Endothelial cell of umbilical vein (primary cell): ENCODE measurements at regions of chr7 and their contacts with region 1.

Region 1: DNA sequence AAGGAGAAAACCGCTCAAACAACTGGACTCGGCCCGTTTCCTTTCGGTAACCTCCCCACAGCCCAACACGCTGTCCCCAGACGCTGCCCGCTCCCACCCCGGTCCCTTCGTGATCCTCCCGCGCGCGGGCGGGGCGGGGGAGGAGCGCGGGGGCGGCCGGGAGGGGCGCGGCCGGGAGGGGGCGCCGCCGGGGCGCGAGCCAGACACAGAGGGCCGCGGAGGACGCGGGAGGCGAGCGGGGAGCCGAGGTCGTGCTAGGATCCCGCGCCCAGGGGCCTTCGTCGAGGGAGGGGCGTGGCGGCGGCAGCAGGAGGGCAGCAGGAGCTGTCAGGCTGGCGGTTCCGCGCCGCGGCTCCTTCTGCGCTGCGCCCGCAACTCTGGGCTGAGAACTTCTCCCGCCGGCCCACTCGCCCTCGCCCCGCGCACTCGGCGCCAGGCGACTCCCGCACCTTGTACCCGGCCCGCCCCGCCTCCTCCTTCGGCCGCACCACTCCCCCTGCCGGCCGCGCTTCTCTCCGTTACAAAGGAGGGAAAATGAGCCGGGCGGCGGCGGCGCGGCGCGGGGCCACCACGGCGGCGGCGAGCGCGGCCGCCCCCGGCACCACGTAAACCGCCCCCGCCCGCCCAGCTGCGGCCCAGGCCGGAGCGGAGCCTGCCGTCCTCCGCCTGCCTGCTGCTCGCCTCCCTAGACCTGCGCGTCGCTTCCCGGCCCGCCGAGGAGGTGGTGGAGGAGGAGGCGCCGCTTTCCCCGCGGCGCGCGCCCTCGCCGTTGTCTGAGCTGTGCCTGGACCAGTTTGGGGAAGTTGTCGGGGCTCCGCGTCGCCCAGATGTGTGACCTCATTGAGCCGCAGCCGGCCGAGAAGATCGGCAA is at the start of gene CDK14:
- DNase-seq: peak; percentile 68
- H3K4me3 ChIP-seq: peak within 1 kb of the TSS; percentile 81 to 95 (median 94)
- H3K27ac ChIP-seq: peak within 1 kb of the TSS; percentile 80
- H3K4me1 ChIP-seq: peaks cover 46% of the 10 kb centered on the region
- H3K27me3 ChIP-seq: no peaks in the 10 kb centered on the region
- CTCF ChIP-seq: peak; percentile 25 to 54
- POLR2A ChIP-seq: no peak
- total RNA-seq, gene CDK14: 34.2 and 41.5 TPM in 2 replicates

Region 2: DNA sequence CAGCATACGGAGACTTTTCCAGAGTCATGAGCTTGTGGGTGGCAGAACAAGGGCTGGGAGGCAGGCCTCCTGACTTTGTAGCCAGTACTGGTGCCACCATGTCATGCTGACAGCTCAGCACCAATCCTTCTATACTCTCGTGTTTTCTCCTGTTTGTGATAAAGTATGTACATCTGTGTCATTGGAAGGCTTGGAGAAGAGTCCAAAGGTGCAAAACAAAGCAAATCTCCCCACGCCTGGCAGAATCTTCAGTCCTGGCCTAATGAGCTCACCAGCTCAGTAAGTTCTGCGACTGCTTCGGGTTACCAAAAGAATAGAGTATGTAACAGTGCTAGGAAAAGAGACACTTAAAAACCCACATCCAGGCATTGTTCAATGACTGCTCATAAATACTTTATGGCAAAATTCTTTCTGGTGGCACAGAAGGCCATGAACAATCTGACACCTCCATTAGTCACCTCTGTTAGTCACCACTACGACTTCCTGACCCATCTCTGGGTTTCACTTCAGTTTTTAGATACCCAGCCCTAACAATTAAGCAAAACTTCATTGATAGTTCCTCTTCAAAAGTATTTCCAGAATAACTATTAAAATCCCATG is 417.3 kb before region 1 on chr7:
- CTCF ChIA-PET with region 1: no interaction called
- POLR2A ChIA-PET with region 1: no interaction called
- dilution Hi-C with region 1: no loop called
- intact Hi-C with region 1: loop called (anchors 2 kb)
- DNase-seq: peak; percentile 85
- H3K4me3 ChIP-seq: peak overlapping the region in 1 of 3 experiments; percentile 5
- H3K27ac ChIP-seq: peak overlapping the region; percentile 93
- H3K4me1 ChIP-seq: peaks cover 36% of the 10 kb centered on the region
- H3K27me3 ChIP-seq: no peaks in the 10 kb centered on the region
- CTCF ChIP-seq: no peak
- POLR2A ChIP-seq: no peak

Region 3: DNA sequence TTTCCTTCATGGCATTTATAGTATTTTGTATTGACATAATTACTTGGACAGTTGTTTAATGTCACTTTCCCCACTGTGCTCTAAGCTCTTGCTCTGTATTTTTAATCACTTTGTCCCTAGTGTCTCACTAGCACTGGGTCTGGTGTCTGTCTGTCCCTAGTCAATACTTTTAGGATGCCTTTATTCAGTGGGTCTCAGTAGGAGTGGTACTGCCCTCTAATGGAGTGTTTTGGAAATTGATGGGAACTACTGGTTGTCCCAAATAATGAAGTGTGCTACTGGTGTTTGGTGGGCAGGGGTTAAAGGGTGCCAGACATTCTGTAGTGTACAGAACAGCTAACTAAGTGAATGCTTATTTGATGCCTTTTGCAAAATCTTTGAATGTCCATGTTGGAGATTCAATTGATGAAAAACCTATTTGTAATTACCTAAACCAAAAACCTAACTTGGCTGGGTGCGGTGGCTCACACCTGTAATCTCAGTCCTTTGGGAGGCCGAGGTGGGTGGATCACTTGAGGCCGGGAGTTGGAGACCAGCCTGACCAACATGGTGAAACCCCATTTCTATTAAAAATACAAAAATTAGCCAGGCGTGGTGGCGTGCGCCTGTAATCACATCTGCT is 33.4 kb after region 1 on chr7:
- CTCF ChIA-PET with region 1: interaction called, 72 read pairs
- POLR2A ChIA-PET with region 1: interaction called, 3 read pairs
- dilution Hi-C with region 1: no loop called
- intact Hi-C with region 1: loop called (anchors 1 kb)
- DNase-seq: peak; percentile 75
- H3K4me3 ChIP-seq: no peak overlapping the region
- H3K27ac ChIP-seq: no peak overlapping the region
- H3K4me1 ChIP-seq: peaks cover 18% of the 10 kb centered on the region
- H3K27me3 ChIP-seq: no peaks in the 10 kb centered on the region
- CTCF ChIP-seq: peak; percentile 56 to 60
- POLR2A ChIP-seq: no peak

Region 4: GRCh38 chr7:90749262-90749661 is 153.2 kb after region 1 on chr7:
- CTCF ChIA-PET with region 1: interaction called, 12 read pairs
- POLR2A ChIA-PET with region 1: no interaction called
- dilution Hi-C with region 1: no loop called
- intact Hi-C with region 1: no loop called
- DNase-seq: no peak
- H3K4me3 ChIP-seq: no peak overlapping the region
- H3K27ac ChIP-seq: no peak overlapping the region
- H3K4me1 ChIP-seq: peaks cover 5% of the 10 kb centered on the region
- H3K27me3 ChIP-seq: no peaks in the 10 kb centered on the region
- CTCF ChIP-seq: no peak
- POLR2A ChIP-seq: no peak

Region 5: GRCh38 chr7:90910136-90910535 is 314.1 kb after region 1 on chr7:
- CTCF ChIA-PET with region 1: no interaction called
- POLR2A ChIA-PET with region 1: no interaction called
- dilution Hi-C with region 1: no loop called
- intact Hi-C with region 1: no loop called
- DNase-seq: no peak
- H3K4me3 ChIP-seq: no peak overlapping the region
- H3K27ac ChIP-seq: no peak overlapping the region
- H3K4me1 ChIP-seq: no peaks in the 10 kb centered on the region
- H3K27me3 ChIP-seq: no peaks in the 10 kb centered on the region
- CTCF ChIP-seq: no peak
- POLR2A ChIP-seq: no peak

Region 6: DNA sequence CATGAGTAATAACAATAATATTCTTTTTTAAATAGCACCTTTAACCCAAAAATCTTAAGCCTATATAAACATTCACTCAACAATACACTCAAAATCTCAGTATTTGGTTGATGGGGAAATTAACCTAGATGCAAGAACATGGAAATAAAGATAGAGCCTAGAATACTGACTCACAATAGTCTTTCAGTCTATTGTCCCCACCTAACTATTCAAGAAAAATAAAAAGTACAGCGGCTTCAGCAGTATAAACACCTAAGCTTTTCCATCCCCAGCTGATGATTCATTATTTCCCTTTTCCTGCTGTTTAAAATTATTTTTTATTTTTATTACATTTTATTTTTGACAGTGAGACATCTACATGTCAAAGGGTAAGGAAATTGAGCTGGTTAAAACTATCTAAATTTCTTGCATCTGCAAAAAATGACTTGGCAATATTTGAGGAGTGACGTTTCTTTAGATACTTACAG is 869.6 kb after region 1 on chr7:
- CTCF ChIA-PET with region 1: no interaction called
- POLR2A ChIA-PET with region 1: no interaction called
- dilution Hi-C with region 1: no loop called
- intact Hi-C with region 1: loop called (anchors 10 kb)
- DNase-seq: peak; percentile 93
- H3K4me3 ChIP-seq: no peak overlapping the region
- H3K27ac ChIP-seq: peak overlapping the region; percentile 75
- H3K4me1 ChIP-seq: peaks cover 25% of the 10 kb centered on the region
- H3K27me3 ChIP-seq: no peaks in the 10 kb centered on the region
- CTCF ChIP-seq: no peak
- POLR2A ChIP-seq: no peak